Activated naive CD4-positive, alpha-beta T cell treated with anti-CD3 and anti-CD28 coated beads for 36 hours (primary cell): ENCODE measurements at regions of chr4 and their contacts with region 1.

Region 1: GRCh38 chr4:83455281-83456129 is at the starts of genes HELQ and MRPS18C:
- DNase-seq: peak; percentile 98
- H3K4me3 Mint-ChIP-seq: peak within 1 kb of the TSS; percentile 100
- H3K27ac Mint-ChIP-seq: peak within 1 kb of the TSS; percentile 100
- H3K4me1 Mint-ChIP-seq: peaks cover 44% of the 10 kb centered on the region
- H3K27me3 Mint-ChIP-seq: no peaks in the 10 kb centered on the region
- total RNA-seq, gene HELQ: 7.9 to 10.9 TPM
- total RNA-seq, gene MRPS18C: 67.2 to 69.9 TPM

Region 2: GRCh38 chr4:82428969-82429727 is 1026.4 kb before region 1 on chr4:
- CTCF ChIA-PET with region 1: no interaction called
- intact Hi-C with region 1: loop called (anchors 2 kb)
- DNase-seq: peak; percentile 92
- H3K4me3 Mint-ChIP-seq: peak overlapping the region; percentile 93
- H3K27ac Mint-ChIP-seq: peak overlapping the region; percentile 99
- H3K4me1 Mint-ChIP-seq: peaks cover 64% of the 10 kb centered on the region
- H3K27me3 Mint-ChIP-seq: no peaks in the 10 kb centered on the region

Region 3: DNA sequence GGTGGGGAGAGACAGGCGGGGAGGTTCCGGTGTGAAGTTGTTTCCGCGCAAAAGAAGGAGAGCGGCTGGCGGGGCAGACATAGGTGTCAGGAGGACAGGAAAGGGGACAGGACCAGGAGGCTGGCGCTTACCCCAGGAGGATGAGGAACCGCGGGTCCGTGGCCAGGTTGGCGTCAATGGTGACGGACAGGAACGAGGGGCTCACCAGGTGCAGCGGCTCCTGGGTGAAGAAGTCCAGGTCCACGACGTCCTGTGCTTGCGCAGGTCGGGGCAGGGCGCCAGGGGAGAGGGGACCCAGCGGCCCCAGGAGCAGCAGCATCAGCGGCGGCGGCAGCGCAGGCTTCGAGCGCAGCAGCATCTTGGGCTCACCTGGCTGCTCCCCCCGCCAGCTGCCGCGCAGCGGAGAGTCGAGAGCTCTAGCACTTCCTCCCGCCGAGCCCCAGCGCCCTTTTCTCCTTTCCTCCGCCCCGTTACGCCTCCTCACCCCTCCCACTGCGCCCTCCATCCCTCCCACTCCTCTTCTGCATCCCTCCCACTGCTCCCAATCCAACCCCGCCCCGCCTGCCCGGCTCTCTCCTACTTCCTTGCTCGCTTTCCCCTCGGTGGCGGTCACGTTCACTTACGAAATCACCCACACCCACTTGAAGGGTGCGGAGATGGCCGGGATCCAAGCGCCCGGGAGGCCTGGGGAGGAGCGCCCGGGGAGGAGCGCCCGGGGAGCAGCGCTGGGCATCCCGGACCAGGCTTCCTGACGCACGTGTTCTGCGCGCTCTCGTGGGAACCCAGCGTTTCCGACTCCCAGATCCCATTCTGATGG is 120.9 kb before region 1 on chr4 and contains the start of gene HPSE:
- CTCF ChIA-PET with region 1: no interaction called
- intact Hi-C with region 1: loop called (anchors 1 kb)
- DNase-seq: peak; percentile 81
- H3K4me3 Mint-ChIP-seq: peak within 1 kb of the TSS; percentile 84
- H3K27ac Mint-ChIP-seq: peak within 1 kb of the TSS; percentile 51
- H3K4me1 Mint-ChIP-seq: peaks cover 16% of the 10 kb centered on the region
- H3K27me3 Mint-ChIP-seq: peaks cover under 1% of the 10 kb centered on the region
- total RNA-seq, gene HPSE: 13.5 to 16.1 TPM

Region 4: DNA sequence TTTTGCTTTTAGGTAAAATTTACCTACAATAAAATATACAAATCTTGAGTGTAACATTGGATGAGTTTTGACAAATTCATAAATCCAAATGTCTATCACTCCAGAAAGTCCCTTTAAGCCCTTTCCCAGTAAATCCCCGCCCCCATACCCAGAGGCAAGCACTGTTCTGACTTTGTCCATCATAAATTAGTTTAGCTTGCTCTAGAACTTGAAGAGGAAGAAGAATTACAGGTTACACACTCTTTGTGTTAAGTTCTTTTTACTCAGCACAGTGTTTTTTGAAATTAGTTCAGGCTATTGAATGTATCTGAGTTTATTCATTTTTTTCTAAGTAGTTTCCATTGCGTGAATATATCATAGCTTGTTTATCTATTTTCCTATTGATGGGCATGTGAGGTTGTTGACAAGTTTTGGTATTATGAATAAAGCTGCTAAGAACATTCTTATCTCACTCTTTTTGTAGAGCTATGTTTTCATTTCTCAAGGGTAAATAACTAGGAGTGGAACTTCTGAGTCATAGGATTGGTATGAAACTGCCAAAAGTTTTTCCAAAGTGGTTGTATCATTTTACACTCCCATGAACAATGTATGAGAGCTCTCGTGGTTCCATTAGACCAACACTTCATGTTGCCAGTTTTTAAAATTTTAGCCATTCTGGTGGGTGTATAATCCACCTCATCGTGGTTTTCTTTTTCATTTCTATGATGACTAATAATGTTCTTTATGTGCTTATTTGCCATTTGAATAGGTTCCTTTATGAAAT is 98.4 kb before region 1 on chr4:
- CTCF ChIA-PET with region 1: interaction called, 5 read pairs
- intact Hi-C with region 1: loop called (anchors 1 kb)
- DNase-seq: peak; percentile 63
- H3K4me3 Mint-ChIP-seq: no peak overlapping the region
- H3K27ac Mint-ChIP-seq: peak overlapping the region; percentile 62
- H3K4me1 Mint-ChIP-seq: peaks cover 15% of the 10 kb centered on the region
- H3K27me3 Mint-ChIP-seq: no peaks in the 10 kb centered on the region

Region 5: DNA sequence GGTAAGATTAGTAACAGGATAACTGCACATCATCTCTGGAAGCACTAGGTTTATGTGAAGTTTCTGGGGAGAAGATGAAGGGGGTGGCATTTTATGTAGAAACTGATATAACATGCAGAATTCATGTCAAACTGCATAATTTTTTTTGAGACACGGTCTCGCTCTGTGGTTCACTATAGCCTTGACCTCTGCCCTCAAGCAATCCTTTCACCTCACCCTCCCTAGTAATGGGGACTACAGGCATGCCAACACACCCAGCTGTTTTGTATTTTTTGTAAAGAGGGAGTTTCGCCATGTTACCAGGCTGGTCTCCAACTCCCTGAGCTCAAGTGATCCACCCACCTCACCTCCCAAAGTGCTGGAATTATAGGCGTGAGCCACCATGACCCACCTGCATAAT is 17.9 kb after region 1 on chr4:
- CTCF ChIA-PET with region 1: no interaction called
- intact Hi-C with region 1: no loop called
- DNase-seq: no peak
- H3K4me3 Mint-ChIP-seq: no peak overlapping the region
- H3K27ac Mint-ChIP-seq: no peak overlapping the region
- H3K4me1 Mint-ChIP-seq: peaks cover 6% of the 10 kb centered on the region
- H3K27me3 Mint-ChIP-seq: no peaks in the 10 kb centered on the region

Region 6: GRCh38 chr4:83535520-83536361 is 80.2 kb after region 1 on chr4 and contains the start of gene GPAT3:
- CTCF ChIA-PET with region 1: no interaction called
- intact Hi-C with region 1: loop called (anchors 1 kb)
- DNase-seq: peak; percentile 83
- H3K4me3 Mint-ChIP-seq: peak within 1 kb of the TSS; percentile 73
- H3K27ac Mint-ChIP-seq: peak within 1 kb of the TSS; percentile 15
- H3K4me1 Mint-ChIP-seq: peaks cover 14% of the 10 kb centered on the region
- H3K27me3 Mint-ChIP-seq: peaks cover 2% of the 10 kb centered on the region
- total RNA-seq, gene GPAT3: 2.0 to 3.1 TPM